Psoas muscle (tissue), 8 donors: ENCODE measurements at regions of chr9 and their contacts with region 1.

Region 1: GRCh38 chr9:119961774-119962424 is 592.7 kb upstream of the BRINP1 start:
- DNase-seq: peak; percentile 16 to 48
- ATAC-seq: peak in 2 of 4 donors; percentile 55 to 65
- H3K4me3 ChIP-seq: no peak overlapping the region
- H3K27ac ChIP-seq: no peak overlapping the region
- H3K4me1 ChIP-seq: peaks cover 7% of the 10 kb centered on the region
- H3K27me3 ChIP-seq: no peaks in the 10 kb centered on the region
- CTCF ChIP-seq: peak; percentile 66

Region 2: DNA sequence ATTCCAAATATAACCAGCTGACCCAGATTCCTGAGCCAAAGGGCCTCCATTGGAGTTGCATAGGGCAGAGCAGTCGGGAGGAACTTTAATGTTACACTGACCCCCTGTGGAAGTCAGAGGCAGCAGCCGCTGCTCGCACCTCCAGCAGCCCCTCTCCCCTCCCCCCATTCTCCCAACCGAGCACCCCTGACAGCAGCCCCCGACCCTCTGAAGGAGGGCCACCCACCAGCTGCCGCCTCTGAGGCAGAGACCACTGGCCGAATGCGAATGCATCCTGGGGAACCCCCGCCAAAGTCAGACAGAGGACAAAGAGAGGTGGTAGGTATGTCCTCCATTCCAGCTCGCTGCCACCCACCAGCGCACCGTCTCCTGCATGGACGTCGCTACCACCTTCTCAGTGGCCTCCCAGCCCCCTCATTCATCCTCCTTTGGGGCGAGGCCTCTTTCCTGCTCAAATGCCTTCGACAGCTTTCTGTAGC is 387.1 kb after region 1 on chr9:
- intact Hi-C with region 1: loop called (anchors 2 to 10 kb)
- DNase-seq: peak in 1 of 2 donors; percentile 52
- ATAC-seq: peak; percentile 70 to 92 (median 87)
- H3K4me3 ChIP-seq: no peak overlapping the region
- H3K27ac ChIP-seq: no peak overlapping the region
- H3K4me1 ChIP-seq: no peaks in the 10 kb centered on the region
- H3K27me3 ChIP-seq: no peaks in the 10 kb centered on the region
- CTCF ChIP-seq: peak; percentile 61

Region 3: DNA sequence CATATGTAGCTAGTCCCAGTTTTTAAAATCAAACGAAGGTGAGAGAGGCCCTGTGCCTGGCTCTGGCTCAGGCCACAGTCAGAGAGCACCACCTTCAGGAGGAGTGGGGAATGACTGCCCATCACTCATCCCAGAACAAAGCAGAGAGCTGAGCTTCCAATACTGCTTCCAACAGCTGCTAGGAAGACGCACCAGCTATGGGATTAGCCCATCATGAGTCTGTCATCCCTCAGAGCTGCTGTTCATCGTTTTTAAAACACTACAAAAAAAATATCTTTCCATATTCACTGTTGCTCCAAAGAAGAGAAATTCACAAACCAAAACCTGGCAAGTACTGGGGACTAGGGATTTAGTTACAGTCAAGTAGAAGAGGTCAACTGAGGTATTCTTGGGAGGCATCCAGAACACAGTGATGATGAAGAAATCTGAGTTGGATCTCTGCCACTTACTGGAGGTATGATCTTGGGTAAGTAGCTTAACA is 515.7 kb after region 1 on chr9:
- intact Hi-C with region 1: loop called in 1 of 2 experiments (anchors 5 kb)
- DNase-seq: peak; percentile 66 to 81
- ATAC-seq: peak; percentile 83 to 90 (median 86)
- H3K4me3 ChIP-seq: no peak overlapping the region
- H3K27ac ChIP-seq: peak overlapping the region; percentile 58
- H3K4me1 ChIP-seq: peaks cover 30% of the 10 kb centered on the region
- H3K27me3 ChIP-seq: no peaks in the 10 kb centered on the region
- CTCF ChIP-seq: peak; percentile 97